Sciatic nerve (tissue), 2 donors: ENCODE measurements at regions of chr5 and their contacts with region 1.

Region 1: GRCh38 chr5:79229357-79230174 is 6.4 kb upstream of the JMY start:
- DNase-seq: no peak
- ATAC-seq: no peak

Region 2: GRCh38 chr5:79255786-79256557 is 26.4 kb after region 1 on chr5:
- intact Hi-C with region 1: no loop called
- DNase-seq: no peak
- ATAC-seq: no peak

Region 3: GRCh38 chr5:79464695-79465332 is 235.2 kb after region 1 on chr5:
- intact Hi-C with region 1: loop called (anchors 10 kb)
- DNase-seq: no peak
- ATAC-seq: no peak